Heart right ventricle (tissue), 16 donors: ENCODE measurements at regions of chr13 and their contacts with region 1.

Region 1: DNA sequence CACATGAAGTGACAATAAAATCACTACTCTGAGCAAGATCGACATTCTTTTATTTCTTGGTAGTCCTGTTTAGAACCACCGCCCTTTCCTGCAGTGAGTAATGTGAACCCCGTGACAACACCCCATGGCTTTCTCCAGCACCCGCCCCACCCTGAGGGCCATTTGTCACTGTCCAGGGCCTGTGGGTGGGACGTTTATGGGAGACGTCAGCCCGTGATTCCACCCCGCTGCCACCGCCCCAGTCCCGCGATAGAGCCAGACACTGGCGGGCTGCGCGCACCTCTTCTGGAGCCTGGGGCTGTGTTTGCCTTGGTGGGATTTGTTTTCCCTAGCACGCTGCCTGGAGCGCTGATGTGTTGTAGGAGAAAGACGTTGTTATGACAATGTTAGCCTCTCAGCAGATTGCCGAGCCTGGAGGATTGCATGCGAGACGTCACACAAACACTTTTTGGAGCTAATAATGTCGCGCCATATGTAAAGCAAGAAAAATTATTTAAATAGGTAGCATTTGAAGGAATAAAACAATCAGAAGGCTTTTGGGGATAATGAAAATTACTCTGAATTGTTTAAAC is 263.7 kb downstream of the TEX29 start:
- DNase-seq: no peak
- ATAC-seq: no peak
- H3K4me3 ChIP-seq: no peak overlapping the region
- H3K27ac ChIP-seq: no peak overlapping the region
- H3K4me1 ChIP-seq: no peaks in the 10 kb centered on the region
- H3K27me3 ChIP-seq: peaks cover 0 to 23% (median 5%) of the 10 kb centered on the region in 7 donors
- CTCF ChIP-seq: no peak

Region 2: DNA sequence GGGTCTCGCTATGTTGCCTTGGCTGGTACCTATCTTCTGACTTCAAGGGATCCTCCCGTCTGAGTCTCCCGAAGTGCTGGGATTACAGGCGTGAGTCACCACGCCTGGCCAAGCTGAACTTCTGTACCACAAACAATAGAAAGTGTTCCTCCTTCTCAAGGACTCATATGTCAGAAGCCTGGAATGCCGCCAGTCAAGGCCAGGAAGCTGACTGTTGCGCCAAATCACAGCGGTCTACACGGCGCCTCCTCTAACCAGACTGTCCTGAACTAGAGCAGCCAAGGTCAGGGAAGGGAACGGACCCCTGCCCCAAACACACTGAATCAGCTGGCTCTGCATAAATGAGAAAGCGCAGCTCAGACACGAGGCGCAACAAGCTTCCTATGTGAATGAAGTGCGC is 1037.3 kb before region 1 on chr13:
- intact Hi-C with region 1: no loop called
- DNase-seq: peak; percentile 78 to 89
- ATAC-seq: peak; percentile 80 to 94 (median 89)
- H3K4me3 ChIP-seq: no peak overlapping the region
- H3K27ac ChIP-seq: peak overlapping the region in 8 of 10 donors; percentile 45 to 79 (median 62)
- H3K4me1 ChIP-seq: peaks cover 0 to 54% (median 34%) of the 10 kb centered on the region in 9 donors
- H3K27me3 ChIP-seq: no peaks in the 10 kb centered on the region
- CTCF ChIP-seq: no peak

Region 3: GRCh38 chr13:110580800-110581199 is 1003.4 kb before region 1 on chr13:
- intact Hi-C with region 1: loop called in 1 of 10 experiments (anchors 10 kb)
- DNase-seq: no peak
- ATAC-seq: no peak
- H3K4me3 ChIP-seq: no peak overlapping the region
- H3K27ac ChIP-seq: no peak overlapping the region
- H3K4me1 ChIP-seq: peaks cover 0 to 6% (median 0%) of the 10 kb centered on the region in 9 donors
- H3K27me3 ChIP-seq: peaks cover 0 to 6% (median 0%) of the 10 kb centered on the region in 7 donors
- CTCF ChIP-seq: no peak

Region 4: DNA sequence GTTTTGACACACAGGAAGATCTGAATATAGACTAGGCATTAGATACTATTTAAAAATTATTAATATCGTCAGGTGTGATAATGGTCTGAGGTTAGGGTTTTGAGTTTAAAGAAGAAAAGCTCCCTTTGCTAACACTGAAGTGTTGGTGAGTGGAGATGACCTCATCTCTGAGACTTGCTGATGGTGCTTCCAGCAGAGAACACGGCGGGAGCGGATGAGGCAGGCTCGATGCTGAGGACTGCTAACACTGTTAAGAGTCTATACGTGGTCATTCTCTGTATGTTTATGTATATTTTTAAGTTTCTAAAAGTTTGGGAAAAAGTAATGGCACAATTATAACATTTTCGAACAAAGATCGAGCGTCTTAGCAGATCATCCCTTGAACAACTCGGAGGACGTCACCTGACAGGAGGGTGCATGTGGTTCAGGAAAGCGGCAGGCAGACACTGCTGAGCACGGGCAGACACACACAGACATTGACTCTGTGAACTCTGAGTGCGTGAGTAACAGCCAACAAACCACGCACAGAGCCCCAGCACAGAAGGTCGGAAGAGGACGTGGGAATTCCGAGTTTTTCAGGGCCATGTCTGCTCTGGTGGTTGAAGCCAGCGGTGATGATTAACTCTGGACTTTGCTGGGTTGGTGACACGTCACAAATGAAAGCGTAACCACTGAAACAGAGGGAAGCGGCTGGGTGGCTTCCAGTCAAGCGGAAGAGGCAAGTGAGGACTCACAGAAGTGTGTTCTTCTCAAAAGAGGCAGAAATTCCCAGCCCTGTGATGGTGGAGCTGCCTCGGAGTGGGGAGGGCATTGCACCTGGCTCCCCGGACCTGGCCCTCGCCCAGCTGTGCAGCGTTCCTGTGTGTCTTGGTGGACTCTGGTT is 355.7 kb before region 1 on chr13:
- intact Hi-C with region 1: no loop called
- DNase-seq: no peak
- ATAC-seq: peak in 1 of 8 donors; percentile 19
- H3K4me3 ChIP-seq: no peak overlapping the region
- H3K27ac ChIP-seq: no peak overlapping the region
- H3K4me1 ChIP-seq: peaks cover 0 to 93% (median 47%) of the 10 kb centered on the region in 9 donors
- H3K27me3 ChIP-seq: no peaks in the 10 kb centered on the region
- CTCF ChIP-seq: no peak

Region 5: DNA sequence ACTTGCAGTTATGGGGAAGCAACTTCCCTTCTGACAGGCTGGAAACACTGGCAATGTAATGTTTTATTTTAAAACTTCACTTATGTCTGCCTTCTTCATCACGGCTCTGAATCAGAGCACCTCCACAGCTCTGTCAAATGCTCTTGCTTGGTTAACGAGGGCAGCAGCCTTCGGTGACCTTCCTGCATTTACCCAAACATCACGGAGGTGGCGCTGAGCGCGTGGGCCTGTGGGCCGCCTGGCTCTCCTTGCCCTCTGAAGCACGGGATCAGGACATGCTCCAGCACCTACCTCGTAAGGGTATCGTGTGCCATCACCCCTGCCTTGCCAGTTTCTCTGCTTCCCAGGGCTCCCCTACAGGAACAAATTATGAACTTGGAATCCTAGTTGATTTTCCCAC is 46.2 kb after region 1 on chr13:
- intact Hi-C with region 1: no loop called
- DNase-seq: no peak
- ATAC-seq: no peak
- H3K4me3 ChIP-seq: no peak overlapping the region
- H3K27ac ChIP-seq: no peak overlapping the region
- H3K4me1 ChIP-seq: no peaks in the 10 kb centered on the region
- H3K27me3 ChIP-seq: peaks cover 0 to 39% (median 10%) of the 10 kb centered on the region in 7 donors
- CTCF ChIP-seq: no peak